Common myeloid progenitor, CD34-positive (primary cell): ENCODE measurements at regions of chr10 and their contacts with region 1.

Region 1: DNA sequence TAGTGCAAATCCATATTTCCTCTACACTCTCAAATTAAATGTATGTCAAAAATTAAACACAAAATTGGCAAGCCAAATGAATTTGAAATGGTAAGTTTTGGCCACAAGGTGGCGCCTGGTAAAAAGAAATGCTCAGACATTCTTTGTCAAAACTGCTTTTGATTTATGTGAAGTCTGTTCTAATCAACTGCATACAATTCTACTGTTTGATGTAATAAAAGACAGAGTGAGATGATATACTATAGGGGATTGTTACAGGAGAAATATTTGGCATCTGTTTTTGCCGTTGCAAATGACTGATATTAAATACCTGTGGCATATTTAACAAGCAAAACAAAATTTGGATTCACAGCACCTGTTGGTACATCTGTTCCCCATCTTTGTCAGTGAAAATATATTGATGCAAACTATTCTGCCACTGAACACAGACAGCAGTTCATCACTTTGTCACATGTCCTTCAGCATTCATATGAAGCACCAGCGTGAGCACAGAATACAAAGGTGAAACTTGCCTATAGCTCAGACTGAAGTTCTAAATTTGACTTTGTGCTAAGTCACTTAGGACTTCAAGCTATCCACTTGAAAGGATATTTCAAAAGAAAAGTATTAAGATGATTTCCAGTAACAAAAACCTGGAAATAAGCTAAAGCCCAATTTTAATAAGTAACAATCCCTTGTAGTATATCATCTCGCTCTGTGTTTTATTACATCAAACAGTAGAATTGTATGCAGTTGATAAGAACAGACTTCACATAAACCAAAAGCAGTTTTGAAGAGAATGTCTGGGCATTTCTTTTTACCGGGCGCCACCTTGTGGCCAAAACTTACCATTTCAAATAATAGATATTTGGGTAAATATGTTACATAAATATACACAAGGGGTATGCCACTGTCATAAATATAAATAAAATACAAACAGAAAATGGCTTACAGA is 10.2 kb upstream of the CH25H start:
- DNase-seq: peak; percentile 67 to 82 (median 76)
- H3K4me3 ChIP-seq: no peak overlapping the region
- H3K27ac ChIP-seq: peak overlapping the region in 1 of 2 experiments; percentile 8
- H3K4me1 ChIP-seq: peaks cover 2 to 11% (median 5%) of the 10 kb centered on the region in 4 experiments
- H3K27me3 ChIP-seq: no peaks in the 10 kb centered on the region

Region 2: DNA sequence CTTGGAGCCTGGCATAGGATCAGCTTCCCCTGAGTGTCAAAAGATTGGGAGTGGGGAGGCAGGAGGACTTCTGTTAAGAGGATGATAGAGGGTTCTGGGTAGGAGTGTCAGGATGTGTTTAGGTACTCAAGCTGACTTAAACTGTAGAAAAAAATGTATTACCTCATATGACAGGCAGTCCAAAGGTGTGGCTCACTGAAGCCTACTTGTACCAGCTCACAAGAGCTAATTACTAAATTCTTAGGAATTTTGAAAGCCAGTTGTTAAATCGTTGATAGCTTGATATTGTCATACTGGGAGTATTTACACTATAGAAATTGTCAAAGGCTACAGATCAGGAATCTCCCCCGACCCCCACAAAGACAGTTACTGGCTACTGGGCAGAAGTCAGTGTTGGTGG is 194.6 kb before region 1 on chr10:
- CTCF ChIA-PET with region 1: interaction called, 34 read pairs
- POLR2A ChIA-PET with region 1: no interaction called
- DNase-seq: no peak
- H3K4me3 ChIP-seq: no peak overlapping the region
- H3K27ac ChIP-seq: no peak overlapping the region
- H3K4me1 ChIP-seq: no peaks in the 10 kb centered on the region
- H3K27me3 ChIP-seq: no peaks in the 10 kb centered on the region

Region 3: GRCh38 chr10:89029785-89030437 is 187.4 kb before region 1 on chr10:
- CTCF ChIA-PET with region 1: interaction called, 80 read pairs
- POLR2A ChIA-PET with region 1: no interaction called
- DNase-seq: peak; percentile 74 to 81 (median 76)
- H3K4me3 ChIP-seq: peak overlapping the region in 1 of 7 experiments; percentile 42
- H3K27ac ChIP-seq: no peak overlapping the region
- H3K4me1 ChIP-seq: peaks cover 9 to 30% (median 19%) of the 10 kb centered on the region in 4 experiments
- H3K27me3 ChIP-seq: no peaks in the 10 kb centered on the region

Region 4: DNA sequence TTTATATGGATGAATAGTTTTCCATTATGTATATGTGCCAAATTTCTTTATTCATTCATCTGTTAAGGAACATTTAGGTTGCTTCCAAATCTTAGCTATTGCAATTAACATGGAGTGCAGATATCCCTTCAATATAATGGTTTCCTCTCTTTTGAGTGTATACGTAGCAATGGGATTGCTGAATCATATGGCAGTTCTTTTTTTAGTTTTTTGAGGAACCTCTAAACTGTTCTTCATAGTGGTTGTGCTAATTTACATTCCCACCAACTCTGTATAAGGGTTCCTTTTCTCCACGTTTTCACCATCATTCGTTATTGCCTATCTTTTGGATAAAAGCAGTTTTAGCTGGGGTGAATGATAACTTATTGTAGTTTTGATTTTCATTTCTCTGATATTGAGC is 180.2 kb before region 1 on chr10:
- CTCF ChIA-PET with region 1: interaction called, 80 read pairs
- POLR2A ChIA-PET with region 1: no interaction called
- DNase-seq: peak in 2 of 3 donors; percentile 28 to 39
- H3K4me3 ChIP-seq: no peak overlapping the region
- H3K27ac ChIP-seq: no peak overlapping the region
- H3K4me1 ChIP-seq: peaks cover 0 to 15% (median 6%) of the 10 kb centered on the region in 4 experiments
- H3K27me3 ChIP-seq: no peaks in the 10 kb centered on the region

Region 5: DNA sequence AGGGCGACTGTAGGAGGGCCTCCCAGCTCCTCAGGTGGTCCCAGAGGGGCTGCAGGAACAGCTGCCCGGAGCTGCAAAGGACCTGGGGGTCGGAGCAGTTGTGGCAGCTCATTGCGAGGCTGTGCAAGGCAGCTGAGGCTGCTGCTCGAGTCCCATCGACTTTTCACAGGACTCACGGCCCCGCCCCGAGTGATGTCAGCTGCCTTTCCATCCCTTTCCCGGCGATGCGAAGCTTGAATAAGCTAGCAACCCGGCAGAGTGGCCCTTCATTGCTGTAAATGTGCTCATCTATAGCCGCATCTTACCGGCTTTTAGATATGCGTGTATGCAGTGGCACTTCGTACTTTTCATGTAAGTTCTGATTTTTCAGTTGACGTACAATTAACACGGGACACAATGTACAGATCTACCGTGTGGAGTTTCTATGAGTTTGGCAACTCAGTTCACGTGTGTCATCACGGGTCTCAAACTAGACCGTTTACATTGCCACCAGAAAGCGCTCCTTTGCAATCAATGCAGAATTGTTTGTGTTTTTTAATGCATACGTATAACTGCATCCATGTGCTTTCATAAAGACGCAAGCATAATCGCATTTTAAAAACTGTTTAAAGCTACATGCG is 10.0 kb before region 1 on chr10 and contains the start of gene CH25H:
- CTCF ChIA-PET with region 1: interaction called, 15 read pairs
- POLR2A ChIA-PET with region 1: no interaction called
- DNase-seq: peak in 2 of 3 donors; percentile 60 to 70
- H3K4me3 ChIP-seq: peak within 1 kb of the TSS; percentile 42 to 82 (median 63)
- H3K27ac ChIP-seq: no peak within 1 kb of the TSS
- H3K4me1 ChIP-seq: peaks cover 0 to 26% (median 23%) of the 10 kb centered on the region in 4 experiments
- H3K27me3 ChIP-seq: peaks cover 8 to 63% (median 25%) of the 10 kb centered on the region in 5 experiments